Heart left ventricle (tissue), 16 donors: ENCODE measurements at regions of chr2 and their contacts with region 1.

Region 1: GRCh38 chr2:186641807-186642321 is 52.0 kb upstream of the FAM171B start:
- DNase-seq: peak in 2 of 5 donors; percentile 28 to 29
- ATAC-seq: peak in 3 of 4 donors; percentile 83 to 87 (median 84)
- H3K4me3 ChIP-seq: no peak overlapping the region
- H3K27ac ChIP-seq: no peak overlapping the region
- H3K4me1 ChIP-seq: peaks cover 0 to 25% (median 0%) of the 10 kb centered on the region in 12 donors
- H3K27me3 ChIP-seq: no peaks in the 10 kb centered on the region
- CTCF ChIP-seq: peak; percentile 61 to 84 (median 70)
- POLR2A ChIP-seq: no peak

Region 2: DNA sequence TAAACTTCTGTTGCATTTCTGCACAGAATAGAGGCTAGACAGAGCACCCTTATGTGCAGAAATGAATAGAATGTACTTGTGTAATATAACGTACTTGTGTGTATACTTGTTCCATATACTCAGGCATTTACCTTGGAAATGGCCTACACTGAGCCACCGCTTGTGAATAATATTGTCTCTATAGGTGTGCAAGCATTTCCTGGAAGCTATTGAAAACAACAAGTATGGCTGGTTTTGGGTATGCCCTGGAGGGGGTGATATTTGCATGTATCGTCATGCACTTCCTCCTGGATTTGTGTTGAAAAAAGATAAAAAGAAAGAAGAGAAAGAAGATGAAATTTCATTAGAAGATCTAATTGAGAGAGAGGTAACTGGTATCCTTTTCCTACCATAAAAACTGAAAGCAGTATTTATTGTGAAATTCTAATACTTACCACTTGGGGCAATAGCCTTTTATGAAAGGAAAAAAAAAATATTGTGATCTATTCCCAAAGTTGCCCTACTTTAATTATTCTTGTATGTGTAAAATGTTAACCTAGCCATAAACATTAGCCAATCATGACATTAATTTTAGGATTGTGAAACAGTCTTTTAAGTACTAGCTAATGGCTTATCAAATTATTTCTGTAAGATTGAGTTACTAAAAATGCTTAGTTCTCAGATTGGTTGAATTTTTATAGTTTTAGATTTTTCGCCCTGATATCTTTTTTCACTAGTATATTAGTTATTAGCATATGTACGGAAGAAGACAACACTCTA is 137.8 kb before region 1 on chr2:
- intact Hi-C with region 1: loop called (anchors 1 to 5 kb)
- DNase-seq: no peak
- ATAC-seq: no peak
- H3K4me3 ChIP-seq: no peak overlapping the region
- H3K27ac ChIP-seq: no peak overlapping the region
- H3K4me1 ChIP-seq: peaks cover 0 to 9% (median 0%) of the 10 kb centered on the region in 12 donors
- H3K27me3 ChIP-seq: no peaks in the 10 kb centered on the region
- CTCF ChIP-seq: peak; percentile 51 to 76 (median 69)
- POLR2A ChIP-seq: no peak